ENCODE measurements at regions of chr19 and their contacts with region 1.

Region 1: DNA sequence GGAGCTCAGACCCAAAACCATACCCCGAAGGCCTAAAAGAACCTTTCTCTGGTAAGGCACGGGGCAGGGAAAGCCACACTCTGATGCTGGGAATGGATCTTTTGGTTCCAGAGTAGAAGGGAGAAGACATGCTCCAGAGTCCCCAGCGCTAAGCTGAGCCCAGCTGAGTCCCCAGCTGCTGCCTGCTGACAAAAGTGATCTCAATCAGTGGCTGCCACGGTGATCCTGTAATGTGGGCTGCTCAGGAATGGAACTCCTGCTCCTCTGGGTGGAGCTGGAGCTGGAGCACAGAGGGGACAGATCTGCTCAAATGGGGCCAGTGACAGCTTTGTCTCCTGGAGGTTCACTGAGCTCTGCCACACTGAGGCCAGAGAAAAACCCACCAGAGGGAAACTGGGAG is 70.5 kb downstream of the MLLT1 start:
- DNase-seq: no peak
- H3K4me3 ChIP-seq: no peak overlapping the region
- H3K27ac ChIP-seq: no peak overlapping the region
- H3K4me1 ChIP-seq: peaks cover 0 to 1% of the 10 kb centered on the region in 2 donors
- H3K27me3 ChIP-seq: no peaks in the 10 kb centered on the region
- CTCF ChIP-seq: no peak
- POLR2A ChIP-seq: no peak

Region 2: DNA sequence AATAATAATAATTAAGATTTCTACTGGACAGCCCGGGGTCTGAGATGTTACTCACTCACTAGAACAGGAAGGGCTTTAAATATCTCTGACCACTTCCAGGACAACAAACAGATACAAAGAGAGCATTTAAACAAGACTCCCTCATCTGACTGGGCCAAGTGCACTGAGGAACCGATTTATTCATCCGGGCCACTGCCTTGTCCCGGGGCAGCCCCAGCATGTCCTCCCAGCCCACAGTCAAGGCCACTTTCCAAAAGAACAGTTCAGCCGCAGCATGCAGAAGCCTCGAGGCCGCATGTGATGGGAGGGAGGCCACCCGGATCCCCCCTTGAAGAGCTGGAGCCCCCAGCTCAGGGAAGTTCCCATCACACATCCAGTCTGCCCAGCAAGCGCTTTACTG is 40.1 kb after region 1 on chr19:
- intact Hi-C with region 1: no loop called
- DNase-seq: no peak
- H3K4me3 ChIP-seq: no peak overlapping the region
- H3K27ac ChIP-seq: no peak overlapping the region
- H3K4me1 ChIP-seq: no peaks in the 10 kb centered on the region
- H3K27me3 ChIP-seq: no peaks in the 10 kb centered on the region
- CTCF ChIP-seq: no peak
- POLR2A ChIP-seq: no peak

Region 3: DNA sequence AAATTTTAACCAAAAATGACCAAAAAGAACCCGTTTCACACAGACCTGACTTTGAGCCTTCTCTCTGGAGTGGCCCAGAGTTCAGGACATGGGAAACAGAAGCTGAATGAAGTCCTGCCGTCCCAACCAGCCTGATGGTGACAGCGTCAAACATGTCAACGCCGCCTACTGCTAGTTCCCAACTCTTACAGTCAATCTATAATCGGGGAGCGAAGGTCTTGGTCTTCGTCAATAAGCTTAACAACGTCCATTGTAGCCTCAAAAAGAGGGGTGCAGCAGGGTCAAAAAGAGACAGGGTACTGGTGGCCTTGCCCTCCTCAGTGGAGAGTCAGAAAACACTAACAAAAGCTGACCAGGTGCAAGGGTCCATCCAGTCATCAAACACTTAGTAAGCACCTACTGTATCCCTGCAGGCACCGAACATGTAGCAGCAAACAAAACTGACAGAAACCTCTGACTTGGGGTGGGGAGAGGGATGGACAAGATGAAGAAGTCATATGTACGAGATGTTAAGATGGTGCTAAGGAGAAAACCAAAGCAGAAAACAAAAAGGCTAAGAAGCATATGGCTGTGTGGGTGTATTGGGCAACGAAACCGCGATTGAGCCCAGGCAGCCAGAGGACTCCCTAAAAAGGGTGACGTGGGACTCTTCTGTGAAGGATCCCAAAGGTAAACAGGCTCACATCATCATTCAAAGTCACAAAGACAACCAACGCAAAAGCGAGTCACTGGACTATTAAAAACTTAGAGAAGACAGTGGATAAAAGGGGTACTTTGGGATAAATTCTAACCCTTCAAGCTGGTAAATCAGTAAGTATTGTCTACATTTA is 58.5 kb after region 1 on chr19:
- intact Hi-C with region 1: loop called (anchors 5 kb)
- DNase-seq: no peak
- H3K4me3 ChIP-seq: no peak overlapping the region
- H3K27ac ChIP-seq: no peak overlapping the region
- H3K4me1 ChIP-seq: peaks cover 8 to 15% of the 10 kb centered on the region in 2 donors
- H3K27me3 ChIP-seq: no peaks in the 10 kb centered on the region
- CTCF ChIP-seq: no peak
- POLR2A ChIP-seq: no peak